HEK293 (cell line): ENCODE measurements at regions of chr3 and their contacts with region 1.

Region 1: GRCh38 chr3:49406571-49407566 is 4.9 kb downstream of the RHOA start:
- H3K4me3 ChIP-seq: no peak overlapping the region
- H3K27ac ChIP-seq: peak overlapping the region; percentile 39; the same call in 1 of the 2 replicates
- H3K4me1 ChIP-seq: peaks cover 20% of the 10 kb centered on the region
- CTCF ChIP-seq: no peak

Region 2: GRCh38 chr3:48429317-48429959 is 977.4 kb before region 1 on chr3:
- CTCF ChIA-PET with region 1: no interaction called
- POLR2A ChIA-PET with region 1: no interaction called
- H3K4me3 ChIP-seq: peak overlapping the region; percentile 70
- H3K27ac ChIP-seq: peak overlapping the region; percentile 66; the same call in 1 of the 2 replicates
- H3K4me1 ChIP-seq: peaks cover 3% of the 10 kb centered on the region; the same call in 1 of the 2 replicates
- CTCF ChIP-seq: no peak

Region 3: GRCh38 chr3:48989796-48990635 is 416.9 kb before region 1 on chr3 and contains the start of gene P4HTM:
- CTCF ChIA-PET with region 1: no interaction called
- POLR2A ChIA-PET with region 1: no interaction called
- H3K4me3 ChIP-seq: peak within 1 kb of the TSS; percentile 83
- H3K27ac ChIP-seq: peak within 1 kb of the TSS; percentile 82
- H3K4me1 ChIP-seq: no peaks in the 10 kb centered on the region
- CTCF ChIP-seq: peak; percentile 89

Region 4: GRCh38 chr3:49191741-49192140 is 215.1 kb before region 1 on chr3:
- CTCF ChIA-PET with region 1: no interaction called
- POLR2A ChIA-PET with region 1: no interaction called
- H3K4me3 ChIP-seq: no peak overlapping the region
- H3K27ac ChIP-seq: no peak overlapping the region
- H3K4me1 ChIP-seq: no peaks in the 10 kb centered on the region
- CTCF ChIP-seq: no peak

Region 5: GRCh38 chr3:49295489-49296058 is 111.3 kb before region 1 on chr3:
- CTCF ChIA-PET with region 1: no interaction called
- POLR2A ChIA-PET with region 1: no interaction called
- H3K4me3 ChIP-seq: no peak overlapping the region
- H3K27ac ChIP-seq: no peak overlapping the region
- H3K4me1 ChIP-seq: no peaks in the 10 kb centered on the region
- CTCF ChIP-seq: no peak

Region 6: DNA sequence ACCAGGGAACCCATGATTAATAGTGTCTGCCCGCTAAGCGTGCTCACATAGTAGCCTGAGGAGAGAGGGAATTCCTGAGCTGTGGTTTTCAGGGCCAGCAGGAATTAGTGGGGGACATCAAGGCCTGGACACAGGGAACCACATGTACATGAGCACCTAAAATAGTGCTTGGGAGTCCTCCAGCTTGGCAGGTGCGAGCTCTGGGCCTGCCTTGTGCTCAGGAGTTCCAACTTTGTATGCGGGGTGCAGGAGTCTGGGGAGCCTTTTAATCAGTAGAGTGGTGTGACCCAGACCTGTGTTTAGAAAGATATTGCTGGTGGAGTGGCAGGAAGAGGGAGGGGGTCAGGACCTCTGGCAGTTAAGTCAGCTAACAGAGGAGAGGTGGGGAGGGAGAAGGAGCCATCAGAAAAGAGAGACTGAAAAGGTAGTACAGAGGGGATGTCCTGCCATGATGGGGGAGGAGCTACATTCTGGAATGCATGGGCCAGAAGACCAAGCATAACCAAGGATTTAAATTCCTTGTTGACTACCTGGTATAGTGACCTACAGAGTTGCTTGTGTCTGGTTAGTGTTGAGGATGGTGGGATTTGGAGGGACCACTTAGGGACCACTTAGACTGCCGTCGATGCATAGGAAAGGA is 65.1 kb after region 1 on chr3:
- CTCF ChIA-PET with region 1: no interaction called
- POLR2A ChIA-PET with region 1: interaction called, 12 read pairs
- H3K4me3 ChIP-seq: no peak overlapping the region
- H3K27ac ChIP-seq: no peak overlapping the region
- H3K4me1 ChIP-seq: peaks cover 6% of the 10 kb centered on the region; the same call in 1 of the 2 replicates
- CTCF ChIP-seq: no peak